Right cardiac atrium (tissue), 5 donors: ENCODE measurements at regions of chr2 and their contacts with region 1.

Region 1: DNA sequence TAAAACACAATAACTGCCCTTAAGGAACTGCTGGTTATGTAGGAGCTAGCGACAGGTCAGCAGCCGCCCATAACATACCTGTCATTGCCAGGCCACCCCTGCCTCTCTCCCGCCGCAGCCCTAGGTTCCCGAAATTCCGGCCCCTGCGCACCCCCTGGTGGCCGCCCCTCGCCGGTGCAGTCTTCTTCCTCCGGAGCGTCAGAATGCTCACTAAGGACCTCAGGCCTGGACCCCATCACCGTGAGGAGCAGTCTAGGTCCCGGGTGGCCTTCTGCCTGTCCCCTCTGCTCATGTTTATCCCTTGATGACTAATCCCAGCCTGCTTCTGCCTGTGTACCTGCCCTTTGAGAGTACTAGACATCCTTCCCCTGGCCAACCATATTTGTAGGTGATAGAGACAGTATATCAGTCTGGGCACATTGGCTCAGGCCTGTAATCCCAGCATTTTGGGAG is 115.7 kb upstream of the SLC1A4 start:
- DNase-seq: peak; percentile 72 to 92 (median 91)
- ATAC-seq: peak; percentile 70 to 75
- H3K4me3 ChIP-seq: no peak overlapping the region
- H3K27ac ChIP-seq: no peak overlapping the region
- H3K4me1 ChIP-seq: no peaks in the 10 kb centered on the region
- H3K27me3 ChIP-seq: no peaks in the 10 kb centered on the region

Region 2: DNA sequence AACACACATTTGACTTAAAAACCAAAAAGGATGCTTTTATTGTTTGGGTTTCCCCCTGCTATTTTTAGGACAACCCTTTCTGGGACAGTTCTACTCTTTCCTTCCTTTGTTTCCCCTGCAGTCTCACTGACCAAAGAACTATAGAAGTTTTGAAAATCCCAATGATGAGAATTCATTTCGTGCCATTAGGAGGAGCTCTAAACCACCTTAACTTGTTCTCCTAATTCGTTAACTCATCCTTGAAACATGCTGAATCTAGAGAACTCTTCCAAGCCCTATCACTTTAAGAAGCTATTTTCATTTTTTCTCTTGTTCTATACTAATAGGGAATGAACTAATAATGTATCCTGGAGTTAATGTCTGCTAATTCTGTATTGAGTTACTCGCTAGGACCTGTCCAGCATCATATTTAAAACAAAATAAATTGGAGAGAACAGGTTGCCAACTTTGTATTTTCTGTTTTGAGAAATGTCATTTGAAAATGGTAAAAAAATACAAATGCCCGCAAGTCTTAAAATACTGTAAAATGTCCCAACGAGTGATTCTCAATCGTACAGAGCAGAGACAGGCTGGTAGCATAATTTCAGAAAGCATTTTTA is 286.5 kb before region 1 on chr2:
- intact Hi-C with region 1: loop called in 2 of 4 experiments (anchors 2 to 5 kb)
- DNase-seq: no peak
- ATAC-seq: peak; percentile 66 to 70
- H3K4me3 ChIP-seq: no peak overlapping the region
- H3K27ac ChIP-seq: no peak overlapping the region
- H3K4me1 ChIP-seq: peaks cover 1% of the 10 kb centered on the region
- H3K27me3 ChIP-seq: no peaks in the 10 kb centered on the region

Region 3: GRCh38 chr2:65377556-65378192 is 504.2 kb after region 1 on chr2:
- intact Hi-C with region 1: no loop called
- DNase-seq: no peak
- ATAC-seq: peak in 1 of 2 donors; percentile 65
- H3K4me3 ChIP-seq: no peak overlapping the region
- H3K27ac ChIP-seq: no peak overlapping the region
- H3K4me1 ChIP-seq: peaks cover 10% of the 10 kb centered on the region
- H3K27me3 ChIP-seq: no peaks in the 10 kb centered on the region